ENCODE measurements at regions of chr14 and their contacts with region 1.

Region 1: GRCh38 chr14:75542588-75543091 is 20.4 kb downstream of the BATF start:
- DNase-seq: peak; percentile 48 to 84 (median 60)
- H3K4me3 ChIP-seq: peak overlapping the region; percentile 52
- H3K4me3 Mint-ChIP-seq: peak overlapping the region; percentile 72 to 89 (median 79)
- H3K27ac ChIP-seq: peak overlapping the region; percentile 70
- H3K27ac Mint-ChIP-seq: peak overlapping the region; percentile 95 to 98 (median 97)
- H3K4me1 ChIP-seq: peaks cover 58% of the 10 kb centered on the region
- H3K4me1 Mint-ChIP-seq: peaks cover 59 to 78% (median 76%) of the 10 kb centered on the region in 3 donors
- H3K27me3 ChIP-seq: no peaks in the 10 kb centered on the region
- H3K27me3 Mint-ChIP-seq: no peaks in the 10 kb centered on the region

Region 2: DNA sequence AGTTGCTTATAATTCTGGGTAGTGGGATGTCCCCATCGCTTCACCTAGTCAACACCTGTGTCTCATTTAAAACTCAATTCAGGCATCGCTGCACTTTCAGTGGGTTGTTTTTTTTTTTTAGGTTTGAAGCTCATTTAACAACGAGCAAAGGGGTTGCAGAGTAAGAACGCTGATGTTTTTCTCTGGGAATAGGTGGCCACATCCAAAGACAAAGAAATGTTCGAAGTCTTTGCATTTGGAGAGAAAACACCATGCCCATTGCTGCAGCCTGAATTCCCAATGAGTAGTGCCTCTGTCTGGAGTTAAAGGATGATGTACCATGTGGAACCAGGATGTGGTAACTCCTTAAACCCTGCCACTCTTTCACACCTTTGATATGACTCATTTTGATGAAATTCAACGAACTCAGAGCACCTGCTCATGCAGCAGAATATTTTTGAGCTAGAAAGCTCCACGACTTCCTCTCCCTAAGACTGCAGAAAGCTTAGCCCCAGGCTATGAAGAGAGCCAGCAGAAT is 55.4 kb before region 1 on chr14:
- CTCF ChIA-PET with region 1: interaction called, 10 read pairs
- POLR2A ChIA-PET with region 1: no interaction called
- DNase-seq: peak in 1 of 5 donors; percentile 22
- H3K4me3 ChIP-seq: no peak overlapping the region
- H3K4me3 Mint-ChIP-seq: peak overlapping the region in 6 of 7 donors; percentile 4 to 65 (median 20)
- H3K27ac ChIP-seq: no peak overlapping the region
- H3K27ac Mint-ChIP-seq: peak overlapping the region in 5 of 8 donors; percentile 24 to 70 (median 36)
- H3K4me1 ChIP-seq: peaks cover 7% of the 10 kb centered on the region
- H3K4me1 Mint-ChIP-seq: peaks cover 12 to 24% (median 22%) of the 10 kb centered on the region in 3 donors
- H3K27me3 ChIP-seq: no peaks in the 10 kb centered on the region
- H3K27me3 Mint-ChIP-seq: peaks cover 0 to 1% of the 10 kb centered on the region in 2 donors

Region 3: GRCh38 chr14:75514673-75515628 is 27.7 kb before region 1 on chr14:
- CTCF ChIA-PET with region 1: interaction called, 15 read pairs
- POLR2A ChIA-PET with region 1: interaction called, 6 read pairs
- DNase-seq: peak; percentile 33 to 77 (median 52)
- H3K4me3 ChIP-seq: peak overlapping the region; percentile 45
- H3K4me3 Mint-ChIP-seq: peak overlapping the region; percentile 83 to 99 (median 87)
- H3K27ac ChIP-seq: peak overlapping the region; percentile 62
- H3K27ac Mint-ChIP-seq: peak overlapping the region; percentile 92 to 100 (median 97)
- H3K4me1 ChIP-seq: peaks cover 28% of the 10 kb centered on the region
- H3K4me1 Mint-ChIP-seq: peaks cover 36 to 52% (median 49%) of the 10 kb centered on the region in 3 donors
- H3K27me3 ChIP-seq: no peaks in the 10 kb centered on the region
- H3K27me3 Mint-ChIP-seq: no peaks in the 10 kb centered on the region

Region 4: DNA sequence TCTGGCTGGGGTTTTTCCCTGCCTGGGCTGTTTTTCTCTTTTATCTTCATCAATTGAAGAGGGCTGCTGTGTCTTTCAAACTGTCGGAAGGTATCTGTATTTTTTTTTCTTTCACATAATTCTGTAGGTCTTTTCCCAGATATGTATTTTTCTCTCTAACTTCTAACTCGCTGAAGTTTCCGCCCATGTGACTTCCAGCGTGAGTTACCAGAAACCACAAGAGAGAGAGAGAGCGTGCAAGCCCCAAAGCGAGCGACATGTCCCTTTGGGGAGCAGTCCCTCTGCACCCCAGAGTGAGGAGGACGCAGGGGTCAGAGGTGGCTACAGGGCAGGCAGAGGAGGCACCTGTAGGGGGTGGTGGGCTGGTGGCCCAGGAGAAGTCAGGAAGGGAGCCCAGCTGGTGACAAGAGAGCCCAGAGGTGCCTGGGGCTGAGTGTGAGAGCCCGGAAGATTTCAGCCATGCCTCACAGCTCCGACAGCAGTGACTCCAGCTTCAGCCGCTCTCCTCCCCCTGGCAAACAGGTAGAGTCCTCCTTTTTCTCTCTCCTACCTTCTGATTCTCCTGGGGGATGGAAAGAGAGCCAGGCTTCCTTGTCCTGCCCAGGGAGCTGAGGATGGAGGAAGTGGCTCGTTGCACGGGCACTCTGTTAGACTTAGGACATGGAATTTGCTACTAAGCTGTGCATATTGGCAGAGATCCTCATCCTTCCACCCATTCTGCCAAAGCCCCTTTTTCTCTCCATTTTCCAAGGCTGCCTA is 20.2 kb before region 1 on chr14 and contains the start of gene BATF:
- CTCF ChIA-PET with region 1: interaction called, 12 read pairs
- POLR2A ChIA-PET with region 1: interaction called, 13 read pairs
- DNase-seq: peak; percentile 52 to 84 (median 72)
- H3K4me3 ChIP-seq: peak within 1 kb of the TSS; percentile 91
- H3K4me3 Mint-ChIP-seq: peak within 1 kb of the TSS; percentile 96 to 100 (median 99)
- H3K27ac ChIP-seq: peak within 1 kb of the TSS; percentile 66
- H3K27ac Mint-ChIP-seq: peak within 1 kb of the TSS; percentile 93 to 99 (median 97)
- H3K4me1 ChIP-seq: peaks cover 60% of the 10 kb centered on the region
- H3K4me1 Mint-ChIP-seq: peaks cover 65 to 82% (median 77%) of the 10 kb centered on the region in 3 donors
- H3K27me3 ChIP-seq: no peaks in the 10 kb centered on the region
- H3K27me3 Mint-ChIP-seq: no peaks in the 10 kb centered on the region
- total RNA-seq, gene BATF: 165 to 172 TPM

Region 5: GRCh38 chr14:75527449-75528163 is 15.0 kb before region 1 on chr14:
- CTCF ChIA-PET with region 1: interaction called, 12 read pairs
- POLR2A ChIA-PET with region 1: interaction called, 13 read pairs
- DNase-seq: no peak
- H3K4me3 ChIP-seq: no peak overlapping the region
- H3K4me3 Mint-ChIP-seq: peak overlapping the region; percentile 10 to 63 (median 55)
- H3K27ac ChIP-seq: no peak overlapping the region
- H3K27ac Mint-ChIP-seq: peak overlapping the region; percentile 25 to 88 (median 68)
- H3K4me1 ChIP-seq: peaks cover 57% of the 10 kb centered on the region
- H3K4me1 Mint-ChIP-seq: peaks cover 79 to 89% (median 89%) of the 10 kb centered on the region in 3 donors
- H3K27me3 ChIP-seq: no peaks in the 10 kb centered on the region
- H3K27me3 Mint-ChIP-seq: no peaks in the 10 kb centered on the region

Region 6: GRCh38 chr14:76152340-76152696 is 609.7 kb after region 1 on chr14:
- CTCF ChIA-PET with region 1: no interaction called
- POLR2A ChIA-PET with region 1: no interaction called
- DNase-seq: peak; percentile 60 to 83 (median 66)
- H3K4me3 ChIP-seq: peak overlapping the region; percentile 82
- H3K4me3 Mint-ChIP-seq: peak overlapping the region; percentile 89 to 98 (median 94)
- H3K27ac ChIP-seq: peak overlapping the region; percentile 95
- H3K27ac Mint-ChIP-seq: peak overlapping the region; percentile 93 to 99 (median 98)
- H3K4me1 ChIP-seq: peaks cover 49% of the 10 kb centered on the region
- H3K4me1 Mint-ChIP-seq: peaks cover 58 to 63% (median 61%) of the 10 kb centered on the region in 3 donors
- H3K27me3 ChIP-seq: no peaks in the 10 kb centered on the region
- H3K27me3 Mint-ChIP-seq: no peaks in the 10 kb centered on the region